Ovary (tissue), 10 donors: ENCODE measurements at regions of chr1 and their contacts with region 1.

Region 1: DNA sequence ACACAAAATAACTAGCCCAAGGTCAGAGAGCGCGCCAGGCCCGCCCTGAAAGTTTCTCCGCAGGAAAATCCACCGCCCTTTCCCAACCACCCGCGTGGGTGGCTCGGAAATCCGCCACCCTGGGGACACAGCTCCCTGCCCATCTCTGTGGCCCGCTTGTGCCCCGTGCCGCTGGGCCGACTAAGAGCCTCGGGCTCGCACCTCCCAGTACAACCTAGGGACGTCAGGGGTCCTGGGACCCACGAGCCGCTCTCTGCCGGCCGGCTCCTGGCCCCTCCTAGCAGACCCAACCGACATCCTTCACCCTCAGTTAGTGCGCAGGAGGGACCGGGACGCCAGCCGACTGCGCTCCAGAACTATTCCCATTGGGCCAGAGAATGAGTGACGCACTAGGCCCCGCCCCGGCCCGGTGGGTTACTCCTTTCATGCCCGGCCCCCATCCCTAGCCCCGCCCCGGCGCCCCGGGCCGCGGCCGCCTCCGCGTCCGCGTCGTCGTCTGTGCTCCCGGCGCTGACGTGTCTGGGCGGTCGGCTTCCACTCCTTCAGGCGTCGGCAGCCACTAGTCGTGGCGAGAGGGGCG is 395 bp upstream of the UAP1 start:
- DNase-seq: peak; percentile 98 to 99 (median 99)
- H3K4me3 ChIP-seq: peak overlapping the region; percentile 98
- H3K27ac ChIP-seq: peak overlapping the region; percentile 91 to 98
- H3K4me1 ChIP-seq: peaks cover 7% of the 10 kb centered on the region
- H3K27me3 ChIP-seq: no peaks in the 10 kb centered on the region
- CTCF ChIP-seq: no peak
- EP300 ChIP-seq: peak; percentile 70
- POLR2A ChIP-seq: peak; percentile 92

Region 2: GRCh38 chr1:162497723-162498500 is 63.2 kb before region 1 on chr1 and contains the start of gene UHMK1:
- intact Hi-C with region 1: loop called in 1 of 4 experiments (anchors 10 kb)
- DNase-seq: peak; percentile 85 to 91 (median 87)
- H3K4me3 ChIP-seq: peak within 1 kb of the TSS; percentile 78
- H3K27ac ChIP-seq: peak within 1 kb of the TSS; percentile 84 to 88
- H3K4me1 ChIP-seq: peaks cover 6% of the 10 kb centered on the region
- H3K27me3 ChIP-seq: no peaks in the 10 kb centered on the region
- CTCF ChIP-seq: no peak
- EP300 ChIP-seq: no peak
- POLR2A ChIP-seq: peak; percentile 38
- total RNA-seq, gene UHMK1: 21.2 to 36.8 (median 24.7) TPM

Region 3: DNA sequence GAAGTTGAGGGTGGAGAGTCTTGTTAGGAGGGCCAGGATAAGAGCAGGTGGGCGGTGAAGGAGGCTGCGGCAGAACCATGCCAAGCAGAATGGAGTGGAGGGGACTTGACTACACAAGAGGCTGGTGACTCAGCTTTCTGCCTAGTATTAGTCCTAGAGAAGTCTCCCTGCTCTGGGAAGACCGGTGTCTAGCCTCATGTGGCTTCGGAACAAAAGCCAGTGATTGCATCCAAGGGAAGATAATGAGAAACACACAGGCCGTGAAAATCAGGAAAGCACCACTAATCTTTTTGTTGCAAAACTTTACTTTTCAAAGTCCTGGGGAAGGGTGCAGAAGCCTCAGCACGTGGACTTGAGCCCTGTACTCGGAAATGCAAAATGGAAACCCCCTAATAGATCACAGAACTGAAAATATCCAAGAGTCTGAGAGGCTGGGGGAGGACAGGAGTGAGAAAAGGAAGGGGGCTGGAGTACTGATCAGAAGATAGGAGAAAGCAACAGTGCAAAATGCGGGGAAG is 102.5 kb after region 1 on chr1:
- intact Hi-C with region 1: no loop called
- DNase-seq: peak in 2 of 5 donors; percentile 14 to 51
- H3K4me3 ChIP-seq: no peak overlapping the region
- H3K27ac ChIP-seq: no peak overlapping the region
- H3K4me1 ChIP-seq: peaks cover 13% of the 10 kb centered on the region
- H3K27me3 ChIP-seq: no peaks in the 10 kb centered on the region
- CTCF ChIP-seq: no peak
- EP300 ChIP-seq: no peak
- POLR2A ChIP-seq: no peak